Sigmoid colon (tissue), 7 donors: ENCODE measurements at regions of chr10 and their contacts with region 1.

Region 1: GRCh38 chr10:112721080-112721698 is 228.9 kb upstream of the TCF7L2 start:
- DNase-seq: no peak
- H3K4me3 ChIP-seq: no peak overlapping the region
- H3K27ac ChIP-seq: no peak overlapping the region
- H3K4me1 ChIP-seq: peaks cover 0 to 4% (median 0%) of the 10 kb centered on the region in 4 donors
- H3K27me3 ChIP-seq: no peaks in the 10 kb centered on the region
- CTCF ChIP-seq: peak; percentile 27 to 60 (median 48)
- EP300 ChIP-seq: no peak
- POLR2A ChIP-seq: no peak

Region 2: DNA sequence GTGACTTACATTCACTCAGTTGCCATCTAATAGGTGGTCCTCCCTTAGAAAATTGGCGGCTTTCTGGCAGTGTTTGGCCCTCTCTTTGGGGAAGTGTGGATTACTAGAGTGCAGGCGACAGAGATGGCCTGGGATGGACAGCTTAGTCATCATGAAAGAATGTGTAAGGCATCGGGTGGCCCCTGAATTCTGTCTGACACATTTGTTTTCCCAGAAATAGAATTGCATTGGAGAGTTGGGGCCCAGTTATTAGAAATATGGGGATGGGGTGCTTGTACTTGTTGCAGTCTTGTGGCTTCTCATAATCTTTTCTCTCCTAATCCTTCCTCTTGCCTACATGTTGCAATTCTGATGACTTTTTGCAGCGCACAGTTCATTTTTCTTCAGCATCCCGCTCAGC is 242.6 kb after region 1 on chr10:
- intact Hi-C with region 1: no loop called
- DNase-seq: peak; percentile 54
- H3K4me3 ChIP-seq: no peak overlapping the region
- H3K27ac ChIP-seq: peak overlapping the region in 2 of 4 donors; percentile 11 to 73
- H3K4me1 ChIP-seq: peaks cover 0 to 66% (median 56%) of the 10 kb centered on the region in 4 donors
- H3K27me3 ChIP-seq: no peaks in the 10 kb centered on the region
- CTCF ChIP-seq: no peak
- EP300 ChIP-seq: no peak
- POLR2A ChIP-seq: no peak

Region 3: DNA sequence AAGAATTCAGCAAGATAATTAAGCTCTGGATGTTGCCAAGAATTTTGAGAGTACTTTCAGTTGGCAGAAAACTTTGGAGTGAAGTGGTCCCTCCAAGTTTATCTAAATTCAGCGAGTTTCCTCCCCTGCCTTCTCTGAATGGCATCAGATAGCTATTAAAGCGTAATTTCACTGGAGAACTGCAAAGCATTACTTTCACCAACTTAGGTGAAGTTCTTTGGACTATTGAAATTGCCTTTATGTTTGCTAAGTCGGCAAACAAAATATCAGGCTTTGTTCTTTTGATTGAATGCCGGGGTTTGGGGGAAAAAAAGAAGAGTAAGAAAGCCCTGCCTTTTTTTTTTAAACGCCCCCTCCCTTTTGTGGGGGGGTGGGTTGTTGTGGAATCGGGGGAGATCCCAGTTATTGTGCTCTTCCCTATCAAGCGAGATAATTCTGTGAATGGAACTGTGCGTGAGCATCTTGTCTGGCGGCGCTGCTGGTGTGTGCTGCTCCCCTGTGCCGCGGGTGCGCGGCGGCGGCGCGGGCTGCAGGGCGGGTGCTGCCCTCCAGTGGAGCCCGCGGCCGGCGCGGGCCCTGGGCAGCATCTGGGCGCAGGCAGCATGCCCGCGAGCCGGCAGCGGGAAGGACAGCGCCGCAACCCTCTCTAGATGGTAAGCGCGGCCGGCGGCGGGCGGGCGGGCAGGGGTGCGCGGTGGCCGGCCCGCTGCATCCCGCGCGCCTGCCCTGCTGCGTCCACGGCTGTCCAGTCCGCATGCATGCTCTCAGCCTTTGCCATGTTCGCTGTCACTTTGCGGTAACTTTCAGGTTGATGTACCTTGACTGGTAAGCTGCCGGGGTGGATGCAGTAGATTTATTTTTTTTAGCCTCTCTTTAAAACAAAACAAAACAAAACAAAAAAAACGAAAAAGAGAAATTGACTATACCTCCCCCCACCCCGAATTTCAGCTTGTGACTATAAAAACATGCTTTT is 405.3 kb after region 1 on chr10:
- intact Hi-C with region 1: loop called (anchors 5 kb)
- DNase-seq: peak; percentile 86
- H3K4me3 ChIP-seq: peak overlapping the region in 3 of 4 donors; percentile 33 to 44 (median 39)
- H3K27ac ChIP-seq: peak overlapping the region in 2 of 4 donors; percentile 11 to 29
- H3K4me1 ChIP-seq: peaks cover 0 to 23% (median 17%) of the 10 kb centered on the region in 4 donors
- H3K27me3 ChIP-seq: no peaks in the 10 kb centered on the region
- CTCF ChIP-seq: peak in 1 of 4 experiments; percentile 83
- EP300 ChIP-seq: no peak
- POLR2A ChIP-seq: no peak